BJ (cell line): ENCODE measurements at regions of chr12 and their contacts with region 1.

Region 1: DNA sequence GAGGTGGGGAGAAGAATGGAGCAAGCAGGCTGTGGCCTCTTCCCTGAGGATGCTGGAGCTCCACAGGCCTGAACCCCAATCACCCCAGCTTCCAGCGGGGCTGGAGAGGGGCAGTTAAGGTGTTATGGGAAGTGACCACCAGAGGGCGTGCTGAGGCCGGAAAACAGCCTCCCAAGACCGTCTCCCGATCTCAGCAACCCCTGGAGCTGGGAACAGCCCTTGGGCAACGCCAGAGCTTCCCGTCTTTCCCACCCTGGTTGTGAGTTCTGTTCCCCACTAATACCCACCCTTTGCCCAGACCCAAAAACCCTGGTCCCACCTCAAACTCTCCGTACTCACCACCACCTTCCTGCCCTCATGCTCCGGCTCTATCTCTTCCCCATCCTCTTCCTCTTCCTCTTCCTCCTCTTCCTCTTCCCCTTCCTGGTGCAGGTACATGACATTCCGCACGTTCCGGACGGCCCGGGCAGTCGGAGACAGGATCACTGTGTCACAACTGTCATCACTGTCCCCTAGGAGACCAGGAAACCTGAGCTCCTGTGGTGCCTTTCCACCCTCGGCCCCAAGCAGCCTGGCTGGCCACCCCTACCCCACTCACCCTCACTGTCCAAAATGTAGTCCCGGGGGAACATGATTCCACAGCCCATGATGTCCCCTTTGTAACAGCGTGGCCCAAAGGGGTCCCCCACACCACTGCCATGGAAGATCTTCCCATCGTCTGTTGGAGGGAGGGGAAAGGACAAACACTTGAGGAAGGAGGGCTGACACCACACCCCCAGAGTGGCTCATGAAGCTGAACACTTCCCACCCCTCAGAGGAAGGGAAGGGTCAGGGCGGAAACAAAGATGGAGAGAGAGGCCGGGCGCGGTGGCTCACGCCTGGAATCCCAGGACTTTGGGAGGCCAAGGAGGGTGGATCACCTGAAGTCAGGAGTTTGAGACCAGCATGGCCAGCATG is 12.9 kb downstream of the SPRYD3 start:
- DNase-seq: no peak
- H3K4me3 ChIP-seq: no peak overlapping the region
- H3K27me3 ChIP-seq: no peaks in the 10 kb centered on the region
- CTCF ChIP-seq: peak; percentile 81

Region 2: GRCh38 chr12:52506858-52507715 is 559.2 kb before region 1 on chr12:
- CTCF ChIA-PET with region 1: no interaction called
- POLR2A ChIA-PET with region 1: no interaction called
- DNase-seq: no peak
- H3K4me3 ChIP-seq: no peak overlapping the region
- H3K27me3 ChIP-seq: peaks cover 8% of the 10 kb centered on the region
- CTCF ChIP-seq: peak; percentile 71

Region 3: DNA sequence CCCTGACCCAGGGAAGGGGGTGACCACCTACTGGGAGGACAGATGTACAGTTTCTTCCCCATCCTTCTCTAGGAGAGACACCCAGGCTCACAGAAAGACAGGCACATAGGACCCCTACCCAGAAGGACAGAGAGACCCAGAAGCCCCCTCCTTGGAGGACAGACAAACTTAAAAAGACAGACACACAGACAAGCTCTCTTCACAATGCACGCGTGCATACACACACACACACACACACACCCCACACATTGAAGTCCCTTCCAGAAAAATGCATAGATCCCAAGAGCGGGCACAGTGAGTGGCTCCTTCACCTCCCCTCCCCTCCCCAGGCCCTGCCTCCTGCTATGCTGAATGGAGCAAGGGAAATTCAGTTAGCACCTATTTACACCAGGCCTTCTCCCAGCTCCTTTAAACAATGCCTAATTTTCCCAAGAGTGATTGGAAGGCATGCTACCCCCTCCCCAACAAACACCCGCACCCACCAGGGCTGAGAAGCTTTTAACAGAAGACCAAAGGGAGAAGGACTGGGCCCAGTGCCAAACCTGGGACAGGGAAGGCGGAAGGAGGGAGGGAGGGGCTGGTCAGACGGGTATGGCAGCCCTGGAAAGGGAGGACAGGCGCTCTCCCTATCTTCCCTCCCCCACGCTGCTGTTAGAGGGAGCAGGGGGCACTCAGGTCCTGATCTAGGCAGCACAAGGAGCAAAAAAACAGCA is 159.3 kb before region 1 on chr12:
- CTCF ChIA-PET with region 1: no interaction called
- POLR2A ChIA-PET with region 1: no interaction called
- DNase-seq: no peak
- H3K4me3 ChIP-seq: no peak overlapping the region
- H3K27me3 ChIP-seq: no peaks in the 10 kb centered on the region
- CTCF ChIP-seq: no peak

Region 4: DNA sequence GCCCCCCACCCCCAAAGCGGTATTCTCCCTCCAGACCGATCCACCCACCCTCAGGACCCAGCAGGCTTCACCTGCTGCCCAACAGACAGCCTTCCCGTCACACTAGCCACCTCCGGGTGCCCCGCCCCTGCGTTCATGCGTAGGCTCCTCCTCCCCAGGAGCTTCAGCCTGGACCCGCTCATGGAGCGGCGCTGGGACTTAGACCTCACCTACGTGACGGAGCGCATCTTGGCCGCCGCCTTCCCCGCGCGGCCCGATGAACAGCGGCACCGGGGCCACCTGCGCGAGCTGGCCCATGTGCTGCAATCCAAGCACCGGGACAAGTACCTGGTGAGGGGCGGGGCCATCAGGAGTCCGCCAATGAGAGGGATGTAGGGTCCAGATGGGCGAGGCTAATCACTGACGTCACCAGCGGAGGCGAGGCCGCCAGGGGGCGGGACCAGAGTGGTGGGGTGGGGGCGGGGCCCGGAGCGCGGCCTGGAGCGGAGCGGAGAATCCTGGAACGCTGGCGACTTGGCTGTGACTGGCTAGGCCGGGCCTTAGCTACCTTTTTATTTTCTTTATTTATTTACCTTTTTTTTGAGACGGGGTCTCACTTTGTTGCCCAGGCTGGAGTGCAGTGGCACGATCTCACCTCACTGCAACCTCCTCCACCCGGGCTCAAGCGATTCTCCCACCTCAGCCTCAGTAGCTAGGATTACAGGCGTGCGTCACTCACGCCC is 12.0 kb before region 1 on chr12:
- CTCF ChIA-PET with region 1: interaction called, 285 read pairs
- POLR2A ChIA-PET with region 1: no interaction called
- DNase-seq: no peak
- H3K4me3 ChIP-seq: peak overlapping the region; percentile 24
- H3K27me3 ChIP-seq: no peaks in the 10 kb centered on the region
- CTCF ChIP-seq: no peak

Region 5: DNA sequence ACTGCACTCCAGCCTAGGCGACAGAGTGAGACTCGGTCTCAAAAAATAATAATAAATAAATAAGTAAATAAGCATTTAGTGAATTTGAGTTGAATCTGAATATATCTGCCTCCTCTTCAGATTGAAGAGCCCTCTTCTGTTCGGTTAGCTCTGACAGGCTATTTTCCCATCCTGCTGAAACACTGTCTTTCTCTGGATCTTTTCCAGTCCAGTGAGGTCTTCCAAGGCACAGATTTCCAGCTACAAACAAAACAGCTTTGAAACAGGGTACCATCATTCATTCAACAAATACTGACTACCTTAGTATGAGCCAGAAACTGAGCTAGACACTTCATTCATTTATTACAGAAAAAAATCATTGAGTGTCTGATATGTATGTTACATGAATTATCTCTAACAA is 20.1 kb after region 1 on chr12:
- CTCF ChIA-PET with region 1: interaction called, 416 read pairs
- POLR2A ChIA-PET with region 1: no interaction called
- DNase-seq: no peak
- H3K4me3 ChIP-seq: no peak overlapping the region
- H3K27me3 ChIP-seq: no peaks in the 10 kb centered on the region
- CTCF ChIP-seq: no peak

Region 6: GRCh38 chr12:53123578-53124351 is 57.5 kb after region 1 on chr12:
- CTCF ChIA-PET with region 1: no interaction called
- POLR2A ChIA-PET with region 1: no interaction called
- DNase-seq: no peak
- H3K4me3 ChIP-seq: no peak overlapping the region
- H3K27me3 ChIP-seq: no peaks in the 10 kb centered on the region
- CTCF ChIP-seq: no peak

Region 7: GRCh38 chr12:53159195-53159839 is 93.1 kb after region 1 on chr12:
- CTCF ChIA-PET with region 1: interaction called, 27 read pairs
- POLR2A ChIA-PET with region 1: no interaction called
- DNase-seq: no peak
- H3K4me3 ChIP-seq: no peak overlapping the region
- H3K27me3 ChIP-seq: no peaks in the 10 kb centered on the region
- CTCF ChIP-seq: peak; percentile 100

Region 8: DNA sequence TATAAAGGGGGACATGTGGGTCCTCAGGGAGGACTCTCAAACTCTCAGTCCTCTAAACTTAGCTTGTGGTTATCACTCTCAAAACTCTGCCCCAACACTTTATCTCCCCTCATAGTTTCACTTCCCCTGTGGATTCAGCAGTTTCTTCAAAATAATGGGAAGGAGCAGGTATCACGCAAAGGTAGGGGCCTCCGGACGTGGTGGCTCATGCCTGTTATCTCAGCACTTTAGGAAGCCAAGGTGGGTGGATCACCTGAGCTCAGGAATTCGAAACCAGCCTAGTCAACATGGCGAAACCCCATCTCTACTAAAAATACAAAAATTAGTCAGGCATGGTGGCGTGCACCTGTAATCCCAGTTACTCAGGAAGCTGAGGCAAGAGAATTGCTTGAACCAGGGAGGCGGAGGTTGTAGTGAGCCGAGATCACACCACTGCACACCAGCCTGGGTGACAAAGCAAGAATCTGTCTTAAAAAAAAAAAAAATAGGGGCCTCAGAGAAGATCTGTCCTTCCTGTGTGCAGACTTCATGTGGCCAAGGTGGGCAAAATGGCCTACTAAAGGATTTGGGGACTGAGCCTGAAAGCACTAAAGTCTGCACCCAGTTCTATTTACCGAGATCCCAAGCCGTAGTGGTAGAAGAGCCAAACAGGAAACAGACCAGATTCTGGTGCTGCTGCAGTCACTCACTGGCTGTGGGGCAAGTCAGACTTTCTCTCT is 134.4 kb after region 1 on chr12:
- CTCF ChIA-PET with region 1: interaction called, 17 read pairs
- POLR2A ChIA-PET with region 1: no interaction called
- DNase-seq: no peak
- H3K4me3 ChIP-seq: no peak overlapping the region
- H3K27me3 ChIP-seq: no peaks in the 10 kb centered on the region
- CTCF ChIP-seq: no peak